ENCODE measurements at regions of chr7 and their contacts with region 1.

Region 1: DNA sequence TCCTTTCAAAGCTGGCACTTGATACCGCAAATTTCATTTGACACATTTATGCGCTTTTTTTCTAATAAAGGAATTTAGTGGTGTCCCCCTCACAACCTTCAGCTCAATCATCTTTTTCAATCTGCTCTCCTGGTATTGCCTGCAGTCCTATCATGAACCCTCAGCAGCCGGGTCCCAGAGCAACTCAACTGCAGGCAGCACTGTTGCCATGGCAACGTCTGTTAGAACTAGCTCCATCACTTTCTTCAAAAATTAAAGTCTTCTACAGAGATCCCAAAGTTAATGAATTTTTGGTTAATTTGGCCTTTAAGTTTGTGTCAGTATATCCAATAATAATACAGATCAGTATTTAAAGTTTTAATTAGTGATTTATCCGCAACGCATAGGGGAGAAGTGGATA is 136.1 kb upstream of the TARP start:
- DNase-seq: no peak
- ATAC-seq: no peak
- H3K4me3 ChIP-seq: no peak overlapping the region
- H3K27ac ChIP-seq: no peak overlapping the region
- H3K4me1 ChIP-seq: no peaks in the 10 kb centered on the region
- H3K27me3 ChIP-seq: no peaks in the 10 kb centered on the region
- CTCF ChIP-seq: no peak

Region 2: DNA sequence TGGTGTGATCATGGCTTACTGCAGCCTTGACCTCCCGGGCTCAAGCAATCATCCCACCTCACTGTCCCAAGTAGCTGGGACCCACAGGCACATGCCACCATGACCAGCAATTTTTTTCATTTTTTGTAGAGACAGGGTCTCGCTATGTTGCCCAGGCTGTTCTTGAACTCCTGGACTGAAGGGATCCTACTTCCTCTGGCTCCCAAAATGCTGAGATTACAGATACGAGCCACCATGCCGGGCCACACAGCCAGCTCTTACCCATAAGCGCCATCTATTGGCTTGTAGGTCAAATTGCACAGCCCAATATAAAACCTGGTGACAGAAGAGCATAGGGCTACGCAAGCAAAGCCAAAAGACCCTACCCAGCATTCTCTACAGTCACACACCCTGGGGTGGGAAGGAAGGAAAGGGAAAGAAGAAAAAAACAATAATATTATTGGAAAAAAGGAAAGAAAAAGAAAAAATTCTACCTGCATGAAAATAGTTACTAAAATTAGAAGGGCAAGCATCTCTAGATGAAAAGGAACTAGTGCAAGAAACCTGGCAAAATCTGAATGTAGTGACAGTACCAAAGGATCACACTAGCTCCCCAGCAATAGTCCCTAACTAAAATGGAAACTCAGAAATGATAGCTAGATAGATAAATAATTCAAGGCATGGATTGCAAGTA is 251.0 kb after region 1 on chr7:
- intact Hi-C with region 1: loop called in 3 of 10 experiments (anchors 10 kb)
- DNase-seq: no peak
- ATAC-seq: peak in 4 of 8 donors; percentile 35 to 51 (median 46)
- H3K4me3 ChIP-seq: no peak overlapping the region
- H3K27ac ChIP-seq: no peak overlapping the region
- H3K4me1 ChIP-seq: peaks cover 0 to 32% (median 0%) of the 10 kb centered on the region in 9 donors
- H3K27me3 ChIP-seq: peaks cover 0 to 5% (median 0%) of the 10 kb centered on the region in 7 donors
- CTCF ChIP-seq: peak in 8 of 9 donors; percentile 41 to 76 (median 58)

Region 3: DNA sequence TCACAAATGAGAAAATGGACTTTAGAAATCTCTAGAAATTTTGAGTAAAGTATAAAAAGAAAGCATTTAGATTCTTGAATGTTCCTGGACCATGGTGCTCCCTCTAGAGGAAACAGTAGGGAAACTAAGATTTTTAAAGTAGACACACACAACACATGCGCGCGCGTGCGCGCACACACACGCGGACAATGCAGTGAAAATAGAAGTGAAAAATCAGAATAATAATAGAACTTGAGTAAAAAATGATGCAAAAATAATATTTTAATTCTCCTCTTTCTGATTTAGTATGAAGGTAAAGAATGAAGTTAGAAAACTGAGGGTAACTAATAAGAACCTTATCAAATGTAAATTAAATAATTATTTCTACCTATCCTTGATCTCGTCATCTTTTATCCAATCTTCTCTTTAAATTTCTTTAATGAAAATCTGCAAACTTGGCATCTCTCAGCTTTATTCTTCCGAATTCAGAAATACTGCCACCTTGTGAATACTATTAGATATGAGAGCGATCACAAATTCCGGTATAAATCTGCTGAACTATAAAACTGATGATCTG is 338.6 kb after region 1 on chr7:
- intact Hi-C with region 1: loop called in 1 of 10 experiments (anchors 10 kb)
- DNase-seq: no peak
- ATAC-seq: no peak
- H3K4me3 ChIP-seq: no peak overlapping the region
- H3K27ac ChIP-seq: no peak overlapping the region
- H3K4me1 ChIP-seq: no peaks in the 10 kb centered on the region
- H3K27me3 ChIP-seq: no peaks in the 10 kb centered on the region
- CTCF ChIP-seq: peak in 7 of 9 donors; percentile 25 to 56 (median 40)

Region 4: DNA sequence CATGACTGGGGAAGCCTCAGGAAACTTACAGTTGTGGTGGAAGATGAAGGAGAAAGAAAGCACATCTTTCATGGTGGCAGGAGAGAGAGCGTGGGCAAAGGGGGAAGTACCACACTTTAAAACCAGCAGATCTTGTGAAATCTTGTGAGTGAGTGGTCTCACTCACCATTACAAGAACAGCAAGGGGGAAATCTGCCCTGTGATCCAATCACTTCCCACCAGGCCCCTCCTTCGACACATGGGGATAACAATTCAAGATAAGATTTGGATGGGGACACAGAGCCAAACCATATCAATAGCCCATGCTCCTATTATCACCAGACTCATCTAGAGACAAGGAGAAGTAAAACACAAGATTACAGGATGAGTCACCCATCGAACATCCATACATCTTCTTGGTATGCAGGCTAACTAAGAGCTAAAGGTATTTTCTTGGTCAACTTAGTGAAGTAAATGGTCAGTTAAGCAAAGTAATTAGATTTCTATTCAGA is 1101.4 kb after region 1 on chr7:
- intact Hi-C with region 1: loop called in 2 of 10 experiments (anchors 10 kb)
- DNase-seq: no peak
- ATAC-seq: no peak
- H3K4me3 ChIP-seq: no peak overlapping the region
- H3K27ac ChIP-seq: no peak overlapping the region
- H3K4me1 ChIP-seq: no peaks in the 10 kb centered on the region
- H3K27me3 ChIP-seq: peaks cover 0 to 3% (median 0%) of the 10 kb centered on the region in 7 donors
- CTCF ChIP-seq: no peak